ENCODE measurements at regions of chr11 and their contacts with region 1.

Region 1: DNA sequence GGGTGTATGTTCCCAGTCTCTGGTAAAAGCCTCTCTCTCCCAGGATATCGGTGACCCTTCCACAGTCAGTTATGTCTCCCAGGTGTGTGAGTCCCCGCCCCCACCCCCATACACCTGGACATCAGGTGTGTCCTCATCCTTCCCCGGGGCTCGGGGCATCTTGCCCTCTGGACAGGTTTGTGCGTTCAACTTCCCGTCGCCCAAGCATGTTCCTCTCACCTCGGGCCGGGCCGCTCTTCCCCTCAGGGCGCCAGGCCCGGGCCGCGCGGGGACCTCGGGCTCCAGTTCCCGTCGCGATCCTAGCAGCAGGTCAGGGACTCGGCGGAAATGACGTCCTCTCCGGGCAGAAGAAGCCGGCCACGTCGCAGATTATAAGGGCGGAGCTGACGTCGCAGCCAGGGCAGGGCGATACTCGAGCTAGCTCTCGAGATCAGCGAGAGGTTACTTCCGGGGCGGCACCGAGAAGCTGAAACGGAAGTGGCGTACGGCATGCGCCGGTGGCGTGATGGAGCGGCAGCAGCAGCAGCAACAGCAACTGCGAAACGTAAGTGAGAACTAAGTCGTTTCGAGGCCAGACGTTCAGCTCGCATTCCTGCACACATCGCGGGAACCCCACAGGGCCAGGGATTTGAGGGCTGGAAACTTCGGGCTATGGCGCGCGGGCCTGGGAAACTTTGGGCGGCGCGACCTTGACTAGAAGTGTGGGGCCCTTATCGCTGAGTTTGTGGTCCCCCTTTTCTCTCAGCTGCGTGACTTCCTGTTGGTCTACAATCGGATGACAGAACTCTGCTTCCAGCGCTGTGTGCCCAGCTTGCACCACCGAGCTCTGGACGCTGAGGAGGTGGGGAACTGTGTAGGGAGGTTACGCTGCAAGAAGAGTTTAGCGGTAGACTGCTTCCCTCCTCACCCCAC is at the starts of genes ARFIP2 and TIMM10B:
- DNase-seq: peak; percentile 98
- H3K4me3 ChIP-seq: peak within 1 kb of the TSS; percentile 19 to 65 (median 57)
- H3K27ac ChIP-seq: peak within 1 kb of the TSS; percentile 72
- H3K4me1 ChIP-seq: peaks cover 18% of the 10 kb centered on the region
- H3K27me3 ChIP-seq: no peaks in the 10 kb centered on the region
- CTCF ChIP-seq: no peak
- POLR2A ChIP-seq: peak; percentile 70
- total RNA-seq, gene ARFIP2: 46.7 and 48.4 TPM in 2 replicates
- total RNA-seq, gene TIMM10B: 29.2 and 31.3 TPM in 2 replicates

Region 2: GRCh38 chr11:6389921-6390724 is 91.1 kb before region 1 on chr11 and contains the start of gene SMPD1:
- CTCF ChIA-PET with region 1: interaction called, 3 read pairs
- POLR2A ChIA-PET with region 1: no interaction called
- dilution Hi-C with region 1: no loop called
- intact Hi-C with region 1: loop called (anchors 1 kb)
- DNase-seq: peak; percentile 90
- H3K4me3 ChIP-seq: peak within 1 kb of the TSS; percentile 71 to 82 (median 72)
- H3K27ac ChIP-seq: peak within 1 kb of the TSS; percentile 73
- H3K4me1 ChIP-seq: peaks cover 33% of the 10 kb centered on the region
- H3K27me3 ChIP-seq: no peaks in the 10 kb centered on the region
- CTCF ChIP-seq: no peak
- POLR2A ChIP-seq: peak; percentile 86
- total RNA-seq, gene SMPD1: 51.9 and 58.9 TPM in 2 replicates

Region 3: GRCh38 chr11:6402561-6402981 is 78.7 kb before region 1 on chr11:
- CTCF ChIA-PET with region 1: no interaction called
- POLR2A ChIA-PET with region 1: no interaction called
- dilution Hi-C with region 1: no loop called
- intact Hi-C with region 1: no loop called
- DNase-seq: no peak
- H3K4me3 ChIP-seq: no peak overlapping the region
- H3K27ac ChIP-seq: no peak overlapping the region
- H3K4me1 ChIP-seq: no peaks in the 10 kb centered on the region
- H3K27me3 ChIP-seq: no peaks in the 10 kb centered on the region
- CTCF ChIP-seq: no peak
- POLR2A ChIP-seq: no peak

Region 4: GRCh38 chr11:6419009-6419631 is 62.1 kb before region 1 on chr11 and contains the start of gene APBB1:
- CTCF ChIA-PET with region 1: interaction called, 3 read pairs
- POLR2A ChIA-PET with region 1: no interaction called
- dilution Hi-C with region 1: no loop called
- intact Hi-C with region 1: loop called (anchors 2 kb)
- DNase-seq: peak; percentile 67
- H3K4me3 ChIP-seq: peak within 1 kb of the TSS; percentile 78 to 88 (median 86)
- H3K27ac ChIP-seq: no peak within 1 kb of the TSS
- H3K4me1 ChIP-seq: peaks cover 10% of the 10 kb centered on the region
- H3K27me3 ChIP-seq: peaks cover 7 to 14% of the 10 kb centered on the region in 2 experiments
- CTCF ChIP-seq: peak in 1 of 2 donors; percentile 18
- POLR2A ChIP-seq: peak; percentile 79
- total RNA-seq, gene APBB1: 44.3 and 48.0 TPM in 2 replicates

Region 5: GRCh38 chr11:6576471-6577373 is 95.5 kb after region 1 on chr11:
- CTCF ChIA-PET with region 1: no interaction called
- POLR2A ChIA-PET with region 1: no interaction called
- dilution Hi-C with region 1: no loop called
- intact Hi-C with region 1: loop called (anchors 2 kb)
- DNase-seq: peak; percentile 84
- H3K4me3 ChIP-seq: peak overlapping the region in 1 of 3 experiments; percentile 0
- H3K27ac ChIP-seq: peak overlapping the region; percentile 69
- H3K4me1 ChIP-seq: peaks cover 32% of the 10 kb centered on the region
- H3K27me3 ChIP-seq: no peaks in the 10 kb centered on the region
- CTCF ChIP-seq: no peak
- POLR2A ChIP-seq: no peak

Region 6: GRCh38 chr11:6612213-6613041 is 131.2 kb after region 1 on chr11 and contains the start of gene TAF10:
- CTCF ChIA-PET with region 1: no interaction called
- POLR2A ChIA-PET with region 1: no interaction called
- dilution Hi-C with region 1: no loop called
- intact Hi-C with region 1: loop called (anchors 1 kb)
- DNase-seq: peak; percentile 97
- H3K4me3 ChIP-seq: peak within 1 kb of the TSS; percentile 28 to 72 (median 71)
- H3K27ac ChIP-seq: peak within 1 kb of the TSS; percentile 89
- H3K4me1 ChIP-seq: peaks cover 57% of the 10 kb centered on the region
- H3K27me3 ChIP-seq: no peaks in the 10 kb centered on the region
- CTCF ChIP-seq: peak; percentile 41 to 49
- POLR2A ChIP-seq: peak; percentile 92
- total RNA-seq, gene TAF10: 86.2 and 105 TPM in 2 replicates

Region 7: DNA sequence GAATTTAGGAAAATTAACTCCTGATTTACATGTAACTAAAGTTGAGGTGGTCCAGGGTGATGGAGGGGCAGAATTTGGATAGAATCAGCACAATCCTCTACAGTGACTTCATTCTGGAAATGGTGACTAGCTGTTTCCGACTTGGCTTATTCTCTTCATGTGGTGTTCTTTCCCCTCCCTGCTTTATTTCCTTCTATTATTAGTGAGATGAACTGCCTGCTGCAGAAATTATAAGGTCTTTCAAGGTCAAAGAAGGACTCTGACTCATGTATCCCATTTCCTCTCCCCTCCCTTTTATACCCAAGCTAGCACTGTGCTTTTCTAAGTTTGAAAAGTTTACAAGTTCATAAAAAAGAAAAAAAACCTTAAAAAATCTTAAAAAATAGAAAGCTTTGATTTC is 214.1 kb after region 1 on chr11:
- CTCF ChIA-PET with region 1: no interaction called
- POLR2A ChIA-PET with region 1: no interaction called
- dilution Hi-C with region 1: no loop called
- intact Hi-C with region 1: loop called (anchors 1 kb)
- DNase-seq: peak; percentile 95
- H3K4me3 ChIP-seq: peak overlapping the region in 1 of 3 experiments; percentile 6
- H3K27ac ChIP-seq: peak overlapping the region; percentile 88
- H3K4me1 ChIP-seq: peaks cover 31% of the 10 kb centered on the region
- H3K27me3 ChIP-seq: no peaks in the 10 kb centered on the region
- CTCF ChIP-seq: no peak
- POLR2A ChIP-seq: no peak